Gastrocnemius medialis (tissue), 4 donors: ENCODE measurements at regions of chr9 and their contacts with region 1.

Region 1: DNA sequence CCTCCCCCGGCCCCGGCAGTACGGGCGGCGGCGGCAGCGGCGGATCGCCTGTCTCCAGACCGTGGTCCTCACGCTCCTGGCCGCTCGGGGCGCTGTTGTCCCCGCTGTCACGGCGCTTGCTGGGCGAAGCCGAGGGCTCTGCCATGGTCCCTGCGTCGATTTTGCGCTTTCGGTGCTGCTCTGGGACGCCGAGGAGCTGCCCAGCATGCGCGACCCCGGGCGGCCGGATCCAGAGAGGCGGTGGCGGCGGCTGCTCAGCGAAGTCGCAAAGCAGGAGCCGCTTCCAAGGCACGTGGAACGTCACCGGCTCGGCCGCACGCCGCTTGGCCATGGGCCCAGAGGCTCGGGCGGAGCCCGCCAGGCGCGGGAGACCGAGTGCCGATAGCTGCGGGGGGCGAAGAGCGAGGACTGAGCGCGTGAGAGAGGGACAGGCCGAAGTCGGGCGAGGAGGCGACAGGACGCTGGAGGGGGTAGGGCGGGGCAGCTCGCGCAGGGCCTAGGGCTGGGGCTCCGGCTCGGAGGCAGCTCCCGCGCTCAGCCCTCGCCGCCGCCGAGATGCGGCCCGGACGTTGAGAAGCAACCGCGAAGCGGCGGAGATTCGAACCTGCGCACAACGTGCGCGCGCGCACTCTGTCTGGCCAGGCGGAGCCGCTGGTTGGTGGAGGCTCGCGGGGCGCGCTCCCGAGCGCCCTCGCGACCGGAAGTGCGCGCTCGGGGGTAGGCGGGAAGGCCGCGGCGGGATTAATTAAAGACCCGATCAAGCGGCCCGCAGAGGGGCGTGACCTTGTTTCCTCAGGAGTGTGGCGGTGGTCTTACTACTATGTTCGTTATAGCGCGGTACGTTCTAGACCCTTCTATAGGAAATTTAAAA is at the start of gene C9orf40:
- DNase-seq: peak; percentile 75 to 79
- ATAC-seq: peak; percentile 92 to 96
- H3K4me3 ChIP-seq: peak within 1 kb of the TSS; percentile 76 to 100 (median 92)
- H3K27ac ChIP-seq: peak within 1 kb of the TSS; percentile 87 to 95 (median 90)
- H3K4me1 ChIP-seq: no peaks in the 10 kb centered on the region
- H3K27me3 ChIP-seq: no peaks in the 10 kb centered on the region
- CTCF ChIP-seq: peak; percentile 63 to 92 (median 85)
- POLR2A ChIP-seq: peak; percentile 44 to 48
- total RNA-seq, gene C9orf40: 1.2 to 4.2 (median 2.6) TPM

Region 2: DNA sequence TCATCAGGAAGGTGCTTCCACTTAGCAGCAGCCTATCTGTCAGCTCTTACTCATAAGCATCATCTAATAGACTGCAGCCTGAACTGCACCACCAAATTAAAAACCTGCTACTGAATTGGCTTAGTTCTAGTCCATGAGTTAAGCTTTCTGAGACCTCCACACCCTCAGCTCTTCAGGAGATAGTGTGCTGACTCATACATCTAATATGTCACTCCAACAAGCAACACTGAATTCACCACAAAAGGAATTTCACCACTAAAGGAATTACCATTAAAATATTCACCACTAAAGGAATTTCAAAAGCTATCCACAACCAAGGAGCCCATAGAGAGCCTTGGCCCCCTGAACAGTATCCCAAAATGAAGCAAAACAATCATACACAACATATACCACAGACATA is 873.9 kb before region 1 on chr9:
- in situ Hi-C with region 1: no loop called
- intact Hi-C with region 1: no loop called
- DNase-seq: no peak
- ATAC-seq: no peak
- H3K4me3 ChIP-seq: no peak overlapping the region
- H3K27ac ChIP-seq: no peak overlapping the region
- H3K4me1 ChIP-seq: no peaks in the 10 kb centered on the region
- H3K27me3 ChIP-seq: no peaks in the 10 kb centered on the region
- CTCF ChIP-seq: no peak
- POLR2A ChIP-seq: no peak

Region 3: DNA sequence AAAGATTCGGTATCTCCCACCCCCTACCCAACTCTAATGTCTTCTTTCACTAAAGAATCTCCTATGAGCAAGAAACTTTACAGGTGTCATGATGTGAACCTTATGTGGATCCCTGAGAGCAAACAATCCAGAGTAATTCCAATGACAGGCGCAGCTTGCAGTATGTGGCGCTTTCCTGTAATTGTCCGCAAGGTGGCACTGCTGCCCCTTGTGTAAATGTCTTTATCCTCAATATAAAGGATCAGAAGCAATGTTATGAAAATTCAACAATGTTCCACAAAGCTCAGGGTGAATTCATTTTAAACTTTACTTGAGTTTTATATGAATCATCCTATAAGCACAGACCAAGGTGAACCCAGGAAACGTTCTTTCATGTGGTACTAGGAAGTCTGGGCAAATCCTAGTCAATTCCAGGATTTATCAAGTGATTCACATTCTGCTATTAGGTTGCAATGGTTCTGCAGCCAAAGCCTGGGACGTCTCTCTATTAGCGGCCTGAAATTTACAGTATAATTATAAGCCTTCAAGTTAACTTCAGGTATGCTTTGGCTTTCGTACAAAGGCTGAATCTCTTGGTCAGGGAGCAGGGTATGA is 178.5 kb before region 1 on chr9:
- in situ Hi-C with region 1: no loop called
- intact Hi-C with region 1: loop called (anchors 5 kb)
- DNase-seq: peak; percentile 22 to 51
- ATAC-seq: peak in 1 of 2 donors; percentile 80
- H3K4me3 ChIP-seq: no peak overlapping the region
- H3K27ac ChIP-seq: no peak overlapping the region
- H3K4me1 ChIP-seq: no peaks in the 10 kb centered on the region
- H3K27me3 ChIP-seq: peaks cover 0 to 8% (median 0%) of the 10 kb centered on the region in 3 donors
- CTCF ChIP-seq: peak; percentile 47 to 89 (median 73)
- POLR2A ChIP-seq: no peak

Region 4: DNA sequence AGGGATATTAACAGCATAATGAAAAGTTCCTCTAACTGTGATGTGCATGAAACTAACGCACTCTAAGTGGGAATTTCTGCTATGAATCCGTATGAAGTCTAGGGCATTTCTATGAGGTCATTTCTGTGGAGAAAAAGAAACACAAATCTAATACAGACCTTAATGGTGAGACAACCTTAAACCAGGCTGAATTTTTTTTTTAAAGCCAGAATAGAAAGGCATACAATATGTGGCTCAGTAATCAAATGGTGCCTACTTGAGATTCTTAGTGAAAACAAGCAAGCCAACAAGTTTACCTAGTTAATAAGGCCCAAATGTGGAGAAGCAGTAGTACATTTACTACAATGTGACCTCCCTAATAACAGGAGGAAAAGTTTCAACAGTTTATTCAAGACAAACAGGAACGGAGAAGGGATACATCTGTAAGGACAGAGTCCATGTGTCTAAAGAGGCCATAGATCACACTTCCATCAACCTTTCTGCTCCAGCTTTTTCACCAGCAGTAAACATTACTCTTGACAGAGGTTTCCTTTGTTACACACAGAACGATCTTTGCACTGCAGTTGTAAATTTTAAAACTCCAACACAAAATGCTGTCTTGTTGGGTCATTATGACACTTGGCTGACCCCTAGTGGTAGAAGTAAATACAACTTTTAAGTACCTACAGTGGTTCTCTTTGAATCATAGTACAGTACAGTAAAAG is 49.4 kb after region 1 on chr9:
- in situ Hi-C with region 1: no loop called
- intact Hi-C with region 1: loop called (anchors 2 kb)
- DNase-seq: no peak
- ATAC-seq: peak; percentile 68 to 86
- H3K4me3 ChIP-seq: no peak overlapping the region
- H3K27ac ChIP-seq: no peak overlapping the region
- H3K4me1 ChIP-seq: no peaks in the 10 kb centered on the region
- H3K27me3 ChIP-seq: no peaks in the 10 kb centered on the region
- CTCF ChIP-seq: peak; percentile 66 to 79 (median 73)
- POLR2A ChIP-seq: no peak

Region 5: GRCh38 chr9:75027187-75028107 is 74.9 kb after region 1 on chr9:
- in situ Hi-C with region 1: loop called in 1 of 4 experiments (anchors 10 kb)
- intact Hi-C with region 1: loop called (anchors 1 kb)
- DNase-seq: peak; percentile 49 to 70
- ATAC-seq: peak; percentile 71 to 74
- H3K4me3 ChIP-seq: peak overlapping the region; percentile 63 to 94 (median 64)
- H3K27ac ChIP-seq: peak overlapping the region; percentile 78 to 96 (median 84)
- H3K4me1 ChIP-seq: peaks cover 23 to 26% of the 10 kb centered on the region in 2 donors
- H3K27me3 ChIP-seq: no peaks in the 10 kb centered on the region
- CTCF ChIP-seq: peak in 2 of 5 experiments; percentile 17 to 47
- POLR2A ChIP-seq: no peak

Region 6: GRCh38 chr9:75071530-75072124 is 119.1 kb after region 1 on chr9:
- in situ Hi-C with region 1: loop called in 1 of 4 experiments (anchors 10 kb)
- intact Hi-C with region 1: no loop called
- DNase-seq: no peak
- ATAC-seq: no peak
- H3K4me3 ChIP-seq: no peak overlapping the region
- H3K27ac ChIP-seq: no peak overlapping the region
- H3K4me1 ChIP-seq: no peaks in the 10 kb centered on the region
- H3K27me3 ChIP-seq: no peaks in the 10 kb centered on the region
- CTCF ChIP-seq: no peak
- POLR2A ChIP-seq: no peak

Region 7: DNA sequence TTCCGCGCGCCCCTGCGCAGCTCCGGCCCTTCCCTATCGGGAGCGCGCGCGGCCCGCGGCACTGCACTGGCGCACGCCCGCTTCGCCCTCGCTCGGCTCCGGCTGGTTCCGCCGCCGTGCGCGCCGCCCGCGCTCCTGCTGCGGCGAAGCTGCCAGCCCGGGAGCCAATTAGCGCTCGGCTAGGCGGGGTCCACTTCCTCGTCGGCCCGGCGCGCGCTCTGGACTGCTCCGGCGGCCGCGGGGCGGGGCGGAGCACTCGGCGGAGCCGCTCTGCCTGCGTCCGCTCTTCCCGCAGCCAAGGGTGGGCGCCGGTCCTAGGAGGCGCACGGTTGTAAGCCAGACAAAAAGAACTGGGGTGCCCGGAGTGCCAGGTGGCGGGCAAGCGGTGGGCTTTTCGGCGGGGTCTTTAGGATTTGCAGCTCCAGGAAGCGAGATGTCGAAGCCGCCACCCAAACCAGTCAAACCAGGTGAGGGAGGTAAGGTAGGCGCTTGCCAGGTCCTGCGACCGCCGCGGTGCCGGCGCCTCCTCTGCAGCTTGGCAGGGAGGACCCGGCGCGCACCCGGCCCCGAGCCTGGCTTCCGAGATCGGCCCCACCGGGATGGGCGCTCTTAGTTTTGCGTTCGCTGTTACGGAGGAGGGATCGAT is 135.9 kb after region 1 on chr9 and contains the start of gene OSTF1:
- in situ Hi-C with region 1: no loop called
- intact Hi-C with region 1: loop called (anchors 1 kb)
- DNase-seq: peak; percentile 92 to 93
- ATAC-seq: peak; percentile 83 to 84
- H3K4me3 ChIP-seq: peak within 1 kb of the TSS; percentile 84 to 97 (median 94)
- H3K27ac ChIP-seq: peak within 1 kb of the TSS; percentile 89 to 99 (median 94)
- H3K4me1 ChIP-seq: peaks cover 0 to 20% of the 10 kb centered on the region in 2 donors
- H3K27me3 ChIP-seq: no peaks in the 10 kb centered on the region
- CTCF ChIP-seq: no peak
- POLR2A ChIP-seq: peak; percentile 89 to 93
- total RNA-seq, gene OSTF1: 5.2 to 9.8 (median 6.2) TPM

Region 8: GRCh38 chr9:75185585-75186170 is 233.2 kb after region 1 on chr9:
- in situ Hi-C with region 1: no loop called
- intact Hi-C with region 1: no loop called
- DNase-seq: no peak
- ATAC-seq: no peak
- H3K4me3 ChIP-seq: no peak overlapping the region
- H3K27ac ChIP-seq: no peak overlapping the region
- H3K4me1 ChIP-seq: no peaks in the 10 kb centered on the region
- H3K27me3 ChIP-seq: no peaks in the 10 kb centered on the region
- CTCF ChIP-seq: peak in 2 of 5 experiments; percentile 20 to 39
- POLR2A ChIP-seq: no peak